B cell (primary cell): ENCODE measurements at regions of chrX and their contacts with region 1.

Region 1: GRCh38 chrX:48574270-48575266 is at the start of gene RBM3:
- DNase-seq: peak; percentile 94
- ATAC-seq: peak; percentile 95
- H3K4me3 ChIP-seq: peak within 1 kb of the TSS; percentile 60 to 88 (median 73)
- H3K4me3 Mint-ChIP-seq: peak within 1 kb of the TSS; percentile 88
- H3K27ac ChIP-seq: peak within 1 kb of the TSS; percentile 98 to 99
- H3K27ac Mint-ChIP-seq: peak within 1 kb of the TSS; percentile 97
- H3K4me1 ChIP-seq: peaks cover 16 to 22% of the 10 kb centered on the region in 2 donors
- H3K4me1 Mint-ChIP-seq: peaks cover 21% of the 10 kb centered on the region
- H3K27me3 ChIP-seq: no peaks in the 10 kb centered on the region
- H3K27me3 Mint-ChIP-seq: no peaks in the 10 kb centered on the region
- CTCF ChIP-seq: peak; percentile 43
- total RNA-seq, gene RBM3: 190 and 200 TPM in 2 replicates

Region 2: GRCh38 chrX:47373198-47373597 is 1201.4 kb before region 1 on chrX:
- CTCF ChIA-PET with region 1: no interaction called
- POLR2A ChIA-PET with region 1: interaction called, 10 read pairs
- intact Hi-C with region 1: no loop called
- DNase-seq: no peak
- ATAC-seq: no peak
- H3K4me3 ChIP-seq: no peak overlapping the region
- H3K4me3 Mint-ChIP-seq: no peak overlapping the region
- H3K27ac ChIP-seq: no peak overlapping the region
- H3K27ac Mint-ChIP-seq: no peak overlapping the region
- H3K4me1 ChIP-seq: no peaks in the 10 kb centered on the region
- H3K4me1 Mint-ChIP-seq: peaks cover 3% of the 10 kb centered on the region
- H3K27me3 ChIP-seq: no peaks in the 10 kb centered on the region
- H3K27me3 Mint-ChIP-seq: no peaks in the 10 kb centered on the region
- CTCF ChIP-seq: no peak

Region 3: DNA sequence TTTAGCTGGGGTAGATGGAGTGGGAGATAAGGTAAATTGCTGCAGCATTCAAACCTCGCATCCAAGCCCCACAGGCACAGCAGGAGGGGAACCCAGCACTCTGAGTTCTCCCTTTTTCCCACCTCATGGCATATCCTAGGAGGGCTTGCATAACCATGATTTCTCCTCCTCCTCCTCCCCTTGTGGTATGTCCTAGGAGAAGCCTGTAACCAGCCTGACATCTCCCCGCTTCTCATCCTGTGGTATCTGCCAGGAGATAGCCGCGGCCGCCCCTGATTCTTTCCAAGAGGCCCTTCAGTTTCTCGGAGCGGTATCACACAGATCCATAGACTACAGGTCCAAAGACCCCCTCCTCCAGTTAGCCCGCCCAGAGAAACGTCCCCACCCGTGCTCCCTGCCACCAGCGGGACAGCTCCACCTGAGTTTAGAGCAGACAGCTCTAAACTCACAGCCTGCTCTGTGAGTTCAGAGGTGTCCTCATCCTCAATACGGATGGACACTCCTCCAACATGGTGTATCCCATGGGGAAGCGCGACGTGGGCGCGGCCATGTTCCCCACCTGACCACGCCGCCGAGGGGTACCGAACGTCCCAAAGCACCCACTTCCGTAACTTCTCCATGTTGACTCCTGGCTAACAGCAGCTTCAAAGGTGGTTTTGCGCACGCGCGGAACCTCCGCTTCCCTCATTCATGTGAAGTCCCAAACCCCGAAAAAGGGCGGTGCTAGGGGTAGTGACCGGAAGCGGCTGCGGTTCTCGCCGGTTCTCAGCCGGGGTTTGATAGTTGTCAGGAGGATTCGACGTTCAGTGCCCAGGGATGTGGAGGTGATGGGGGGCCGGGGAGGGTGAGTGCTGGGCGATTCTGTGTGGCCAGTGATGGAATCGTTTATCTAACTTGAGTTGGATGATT is 738.1 kb before region 1 on chrX and contains the start of gene ZNF81:
- CTCF ChIA-PET with region 1: no interaction called
- POLR2A ChIA-PET with region 1: interaction called, 3 read pairs
- intact Hi-C with region 1: loop called (anchors 1 kb)
- DNase-seq: peak; percentile 93
- ATAC-seq: peak; percentile 97
- H3K4me3 ChIP-seq: peak within 1 kb of the TSS; percentile 66 to 76 (median 70)
- H3K4me3 Mint-ChIP-seq: peak within 1 kb of the TSS; percentile 99
- H3K27ac ChIP-seq: peak within 1 kb of the TSS; percentile 64 to 73
- H3K27ac Mint-ChIP-seq: peak within 1 kb of the TSS; percentile 98
- H3K4me1 ChIP-seq: peaks cover 9% of the 10 kb centered on the region in 2 donors
- H3K4me1 Mint-ChIP-seq: peaks cover 24% of the 10 kb centered on the region
- H3K27me3 ChIP-seq: no peaks in the 10 kb centered on the region
- H3K27me3 Mint-ChIP-seq: no peaks in the 10 kb centered on the region
- CTCF ChIP-seq: no peak
- total RNA-seq, gene ZNF81: 15.3 and 17.7 TPM in 2 replicates

Region 4: GRCh38 chrX:47958761-47959342 is 615.7 kb before region 1 on chrX:
- CTCF ChIA-PET with region 1: no interaction called
- POLR2A ChIA-PET with region 1: no interaction called
- intact Hi-C with region 1: no loop called
- DNase-seq: peak; percentile 9
- ATAC-seq: peak; percentile 43
- H3K4me3 ChIP-seq: no peak overlapping the region
- H3K4me3 Mint-ChIP-seq: no peak overlapping the region
- H3K27ac ChIP-seq: no peak overlapping the region
- H3K27ac Mint-ChIP-seq: no peak overlapping the region
- H3K4me1 ChIP-seq: peaks cover 4 to 8% of the 10 kb centered on the region in 2 donors
- H3K4me1 Mint-ChIP-seq: peaks cover 17% of the 10 kb centered on the region
- H3K27me3 ChIP-seq: no peaks in the 10 kb centered on the region
- H3K27me3 Mint-ChIP-seq: no peaks in the 10 kb centered on the region
- CTCF ChIP-seq: no peak

Region 5: DNA sequence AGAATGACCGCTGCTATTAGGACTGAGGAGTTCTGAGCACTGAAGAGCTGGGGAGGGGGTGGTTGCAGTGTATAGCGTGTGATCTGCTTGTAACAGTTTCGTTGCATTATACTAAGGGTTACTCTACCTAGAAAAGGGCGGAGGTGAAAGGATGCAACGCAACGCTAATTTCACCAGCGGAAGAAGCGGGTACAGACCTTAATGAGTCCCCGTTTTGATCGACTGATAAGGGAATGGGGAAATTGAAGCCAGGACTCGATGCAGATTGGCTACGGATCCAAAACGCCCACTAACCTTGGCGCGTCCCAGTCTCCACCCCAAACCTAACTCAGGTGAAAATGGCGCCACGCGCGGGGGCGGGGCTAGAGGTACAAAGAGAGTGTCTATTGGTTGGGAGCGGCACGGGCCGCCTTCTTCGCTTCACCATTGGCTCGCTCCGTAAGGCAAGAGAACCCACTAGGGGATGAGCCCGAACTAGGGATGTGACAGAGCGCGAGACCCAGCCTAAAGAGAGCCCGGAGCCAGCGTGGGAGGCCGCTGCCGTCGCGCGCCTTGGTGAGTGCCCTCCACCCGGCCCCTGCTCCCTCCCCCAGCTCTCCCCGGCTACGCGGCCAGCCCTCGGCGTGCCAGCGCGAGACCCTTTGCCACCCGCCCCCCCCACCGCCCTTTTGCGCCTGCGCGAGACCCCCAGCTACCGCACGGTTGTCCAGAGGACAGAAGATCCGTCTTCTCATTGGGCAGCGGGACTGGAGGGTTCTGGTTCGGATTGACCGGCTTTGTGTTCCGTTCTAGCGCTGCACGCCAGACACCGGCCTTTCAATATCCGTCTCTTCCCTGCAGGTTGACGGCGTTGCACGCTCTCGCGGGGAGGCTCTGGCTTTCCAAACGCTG is 53.0 kb before region 1 on chrX and contains the start of gene EBP:
- CTCF ChIA-PET with region 1: interaction called, 3 read pairs
- POLR2A ChIA-PET with region 1: interaction called, 3 read pairs
- intact Hi-C with region 1: loop called (anchors 1 kb)
- DNase-seq: peak; percentile 94
- ATAC-seq: peak; percentile 97
- H3K4me3 ChIP-seq: peak within 1 kb of the TSS; percentile 47 to 72 (median 62)
- H3K4me3 Mint-ChIP-seq: peak within 1 kb of the TSS; percentile 87
- H3K27ac ChIP-seq: peak within 1 kb of the TSS; percentile 74
- H3K27ac Mint-ChIP-seq: peak within 1 kb of the TSS; percentile 89
- H3K4me1 ChIP-seq: peaks cover 12 to 19% of the 10 kb centered on the region in 2 donors
- H3K4me1 Mint-ChIP-seq: peaks cover 12% of the 10 kb centered on the region
- H3K27me3 ChIP-seq: no peaks in the 10 kb centered on the region
- H3K27me3 Mint-ChIP-seq: no peaks in the 10 kb centered on the region
- CTCF ChIP-seq: no peak
- total RNA-seq, gene EBP: 27.9 and 33.4 TPM in 2 replicates

Region 6: GRCh38 chrX:48597353-48598264 is 23.0 kb after region 1 on chrX and contains the start of gene WDR13:
- CTCF ChIA-PET with region 1: no interaction called
- POLR2A ChIA-PET with region 1: interaction called, 5 read pairs
- intact Hi-C with region 1: loop called (anchors 1 kb)
- DNase-seq: peak; percentile 91
- ATAC-seq: peak; percentile 76
- H3K4me3 ChIP-seq: peak within 1 kb of the TSS; percentile 55 to 93 (median 75)
- H3K4me3 Mint-ChIP-seq: peak within 1 kb of the TSS; percentile 98
- H3K27ac ChIP-seq: peak within 1 kb of the TSS; percentile 95 to 98
- H3K27ac Mint-ChIP-seq: peak within 1 kb of the TSS; percentile 100
- H3K4me1 ChIP-seq: peaks cover 0 to 12% of the 10 kb centered on the region in 2 donors
- H3K4me1 Mint-ChIP-seq: peaks cover 8% of the 10 kb centered on the region
- H3K27me3 ChIP-seq: no peaks in the 10 kb centered on the region
- H3K27me3 Mint-ChIP-seq: no peaks in the 10 kb centered on the region
- CTCF ChIP-seq: no peak
- total RNA-seq, gene WDR13: 85.1 and 94.6 TPM in 2 replicates